HCT116 (cell line): ENCODE measurements at regions of chr11 and their contacts with region 1.

Region 1: GRCh38 chr11:62905927-62906531 is 15.1 kb downstream of the CHRM1 start:
- DNase-seq: peak; percentile 73
- ATAC-seq: peak; percentile 86
- H3K4me3 ChIP-seq: no peak overlapping the region
- H3K27ac ChIP-seq: no peak overlapping the region
- H3K4me1 ChIP-seq: peaks cover 9 to 18% of the 10 kb centered on the region in 2 experiments; a peak in 3 of 4 replicates
- H3K27me3 ChIP-seq: no peaks in the 10 kb centered on the region
- CTCF ChIP-seq: peak; percentile 97 to 100 (median 98)
- POLR2A ChIP-seq: no peak
- RAD21 ChIP-seq: peak; percentile 98

Region 2: GRCh38 chr11:62948765-62949320 is 42.8 kb after region 1 on chr11:
- CTCF ChIA-PET with region 1: no interaction called
- POLR2A ChIA-PET with region 1: no interaction called
- RAD21 ChIA-PET with region 1: no interaction called
- intact Hi-C with region 1: no loop called
- DNase-seq: no peak
- ATAC-seq: no peak
- H3K4me3 ChIP-seq: no peak overlapping the region
- H3K27ac ChIP-seq: no peak overlapping the region
- H3K4me1 ChIP-seq: no peaks in the 10 kb centered on the region
- H3K27me3 ChIP-seq: no peaks in the 10 kb centered on the region
- CTCF ChIP-seq: no peak
- POLR2A ChIP-seq: no peak
- RAD21 ChIP-seq: no peak

Region 3: DNA sequence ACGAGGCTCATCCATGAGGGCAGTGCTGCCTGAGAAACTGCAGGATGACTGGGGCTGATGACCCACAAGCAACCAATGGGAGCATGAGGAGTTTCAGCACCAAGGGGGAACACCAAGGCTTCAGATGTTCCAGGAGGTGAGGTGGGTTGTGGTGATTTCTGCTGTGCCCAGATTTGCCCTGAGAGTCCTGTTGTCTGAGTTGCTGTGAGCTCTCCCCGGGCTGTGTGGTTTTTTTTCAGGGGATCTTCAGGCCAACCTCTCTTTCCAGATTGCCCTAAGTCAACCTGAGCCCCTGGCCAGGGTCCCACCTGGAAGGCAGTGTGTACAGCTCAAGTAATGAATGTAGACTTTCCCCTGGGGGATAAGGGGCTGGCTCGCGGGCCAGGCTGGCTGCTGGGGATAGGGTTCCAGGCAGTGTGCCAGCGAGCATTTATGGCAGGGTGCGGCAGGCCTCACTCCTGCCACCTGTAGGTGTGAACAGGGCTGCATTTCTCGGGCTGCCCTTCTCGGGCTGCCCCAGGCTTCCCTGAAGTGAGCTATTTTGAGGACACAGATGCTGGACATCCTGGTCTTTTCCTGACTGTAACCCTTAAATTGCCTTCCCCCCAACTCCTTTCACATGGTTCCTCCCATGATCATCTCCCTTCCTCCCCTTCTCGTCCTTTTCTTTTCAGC is 69.0 kb after region 1 on chr11:
- CTCF ChIA-PET with region 1: interaction called, 27 read pairs
- POLR2A ChIA-PET with region 1: no interaction called
- RAD21 ChIA-PET with region 1: interaction called, 5 to 11 read pairs
- intact Hi-C with region 1: loop called (anchors 1 kb)
- DNase-seq: peak; percentile 36
- ATAC-seq: peak; percentile 94
- H3K4me3 ChIP-seq: no peak overlapping the region
- H3K27ac ChIP-seq: no peak overlapping the region
- H3K4me1 ChIP-seq: peaks cover 7 to 16% of the 10 kb centered on the region in 2 experiments; a peak in 3 of 4 replicates
- H3K27me3 ChIP-seq: no peaks in the 10 kb centered on the region
- CTCF ChIP-seq: peak; percentile 44 to 82 (median 73); a peak in 5 of 6 replicates
- POLR2A ChIP-seq: no peak
- RAD21 ChIP-seq: peak; percentile 44

Region 4: DNA sequence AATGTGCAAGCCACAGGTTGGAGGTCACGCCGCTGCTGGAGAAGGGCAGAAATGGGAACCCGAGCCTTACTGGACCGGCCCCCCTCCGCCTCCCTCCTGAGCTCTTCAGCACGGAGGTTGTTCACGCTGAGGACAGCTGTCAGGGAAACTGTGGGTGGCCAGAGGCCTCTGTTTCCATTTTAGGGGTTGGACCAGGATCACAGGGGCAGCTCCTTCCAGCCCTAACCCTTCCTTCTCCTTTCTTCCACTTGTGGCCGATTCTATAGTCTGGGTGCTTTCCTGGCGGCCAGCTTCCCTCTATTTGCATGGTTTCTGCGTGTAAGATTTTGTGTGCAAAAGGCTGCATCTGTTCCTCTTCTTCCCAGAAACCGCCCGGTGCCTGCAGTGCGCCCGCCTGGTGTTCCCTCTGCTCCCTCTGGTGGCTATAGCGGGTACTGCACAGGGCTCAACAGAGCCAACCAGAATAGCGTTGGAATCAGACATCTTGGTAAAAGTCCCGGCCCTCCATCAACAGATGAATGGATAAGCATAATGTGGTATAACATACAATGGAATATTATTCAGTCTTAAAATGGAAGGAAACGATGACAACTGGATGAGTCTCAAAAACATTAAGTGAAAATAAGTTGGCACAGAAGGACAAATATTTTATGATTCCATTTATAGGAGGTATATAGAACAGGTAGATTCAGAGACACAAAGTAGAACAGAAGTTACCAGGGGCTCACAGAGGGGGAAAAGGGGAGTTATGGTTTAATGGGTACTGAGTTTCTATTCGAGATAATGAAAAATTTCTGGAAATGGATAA is 118.0 kb after region 1 on chr11:
- CTCF ChIA-PET with region 1: interaction called, 285 read pairs
- POLR2A ChIA-PET with region 1: interaction called, 25 read pairs
- RAD21 ChIA-PET with region 1: interaction called, 10 to 14 read pairs
- intact Hi-C with region 1: loop called (anchors 1 kb)
- DNase-seq: peak; percentile 57
- ATAC-seq: peak; percentile 77
- H3K4me3 ChIP-seq: no peak overlapping the region
- H3K27ac ChIP-seq: no peak overlapping the region
- H3K4me1 ChIP-seq: peaks cover 4 to 13% of the 10 kb centered on the region in 2 experiments; a peak in 3 of 4 replicates
- H3K27me3 ChIP-seq: no peaks in the 10 kb centered on the region
- CTCF ChIP-seq: peak; percentile 96 to 100 (median 100)
- POLR2A ChIP-seq: no peak
- RAD21 ChIP-seq: peak; percentile 97

Region 5: DNA sequence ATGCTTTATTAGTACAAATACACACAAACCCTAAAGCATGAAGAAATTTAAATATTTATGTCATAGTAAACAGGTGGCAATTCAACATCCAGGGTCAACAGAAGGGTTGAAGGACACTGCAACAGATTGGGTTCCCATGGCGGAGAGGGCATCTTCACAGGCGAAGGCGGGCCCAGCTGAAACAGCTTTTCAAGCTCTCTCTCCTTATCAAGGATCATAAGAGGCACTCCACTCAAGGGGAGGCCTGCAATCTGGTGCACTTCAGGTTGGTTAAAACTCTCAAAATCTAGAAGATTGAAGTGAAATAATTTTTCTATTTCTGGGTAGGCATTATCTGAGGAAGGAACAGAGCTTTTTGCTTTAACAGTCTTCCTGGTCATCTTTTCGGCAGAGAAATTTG is 126.4 kb after region 1 on chr11:
- CTCF ChIA-PET with region 1: interaction called, 11 read pairs
- POLR2A ChIA-PET with region 1: no interaction called
- RAD21 ChIA-PET with region 1: interaction called in 1 of 2 experiments, 5 read pairs
- intact Hi-C with region 1: no loop called
- DNase-seq: no peak
- ATAC-seq: no peak
- H3K4me3 ChIP-seq: no peak overlapping the region
- H3K27ac ChIP-seq: no peak overlapping the region
- H3K4me1 ChIP-seq: 0 out of 4 replicates have a peak, but pooled peaks cover 0 to 7% of the 10 kb centered on the region in 2 experiments
- H3K27me3 ChIP-seq: no peaks in the 10 kb centered on the region; the same call in 1 of the 2 replicates
- CTCF ChIP-seq: no peak
- POLR2A ChIP-seq: no peak
- RAD21 ChIP-seq: no peak

Region 6: DNA sequence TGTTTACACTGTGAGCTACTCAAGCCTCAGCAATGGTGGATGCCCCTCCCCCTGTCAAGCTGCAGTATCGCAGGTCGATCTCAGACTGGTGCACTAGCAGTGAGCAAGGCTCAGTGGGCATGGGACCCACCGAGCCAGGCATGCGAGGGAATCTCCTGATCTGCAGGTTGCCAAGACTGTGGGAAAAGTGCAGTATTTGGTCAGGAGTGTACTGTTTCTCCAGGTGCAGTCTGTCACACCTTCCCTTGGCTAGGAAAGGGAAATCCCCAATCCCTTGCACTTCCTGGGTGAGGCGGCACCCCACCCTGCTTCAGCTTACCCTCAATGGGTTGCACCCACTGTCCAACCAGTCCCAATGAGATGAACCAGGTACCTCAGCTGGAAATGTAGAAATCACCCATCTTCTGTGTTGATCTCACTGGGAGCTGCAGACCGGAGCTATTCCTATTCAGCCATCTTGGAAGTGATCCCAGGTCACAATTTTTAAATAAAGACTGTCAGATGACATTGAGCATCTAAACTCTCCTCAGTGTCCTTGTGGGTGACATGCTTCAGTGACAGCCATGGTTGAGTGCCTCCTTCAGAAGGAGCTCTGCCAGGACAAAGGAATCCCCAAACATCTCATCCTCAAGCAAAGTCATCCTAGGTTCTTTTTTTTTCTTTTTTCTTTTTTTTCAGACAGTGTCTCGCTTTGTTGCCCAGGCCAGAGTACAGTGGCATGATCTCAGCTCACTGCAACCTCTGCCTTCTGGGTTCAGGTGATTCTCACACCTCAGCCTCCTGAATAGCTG is 227.2 kb after region 1 on chr11:
- CTCF ChIA-PET with region 1: interaction called, 6 read pairs
- POLR2A ChIA-PET with region 1: no interaction called
- RAD21 ChIA-PET with region 1: no interaction called
- intact Hi-C with region 1: loop called (anchors 2 kb)
- DNase-seq: no peak
- ATAC-seq: no peak
- H3K4me3 ChIP-seq: no peak overlapping the region
- H3K27ac ChIP-seq: no peak overlapping the region
- H3K4me1 ChIP-seq: no peaks in the 10 kb centered on the region
- H3K27me3 ChIP-seq: peaks cover 40% of the 10 kb centered on the region
- CTCF ChIP-seq: no peak
- POLR2A ChIP-seq: no peak
- RAD21 ChIP-seq: no peak

Region 7: DNA sequence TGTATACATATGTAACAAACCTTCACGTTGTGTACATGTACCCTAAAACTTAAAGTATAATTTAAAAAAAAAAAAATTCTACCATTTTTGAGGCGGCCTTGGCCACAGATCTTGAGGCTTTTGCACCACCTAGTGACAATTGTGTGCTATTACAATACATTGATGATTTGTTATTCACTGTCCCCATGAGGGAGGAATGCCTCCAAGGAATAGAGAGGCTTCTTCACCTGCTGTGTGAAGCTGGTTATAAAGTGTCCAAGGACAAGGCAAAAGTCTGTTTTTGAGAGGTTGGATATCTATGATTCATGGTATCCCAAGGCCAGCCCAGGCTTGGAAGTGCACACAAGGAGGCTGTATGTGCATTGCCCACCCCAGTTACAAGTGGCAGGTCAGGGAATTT is 306.7 kb after region 1 on chr11:
- CTCF ChIA-PET with region 1: interaction called, 7 read pairs
- POLR2A ChIA-PET with region 1: no interaction called
- RAD21 ChIA-PET with region 1: interaction called in 1 of 2 experiments, 4 read pairs
- intact Hi-C with region 1: loop called (anchors 1 kb)
- DNase-seq: peak; percentile 10
- ATAC-seq: peak; percentile 81
- H3K4me3 ChIP-seq: no peak overlapping the region
- H3K27ac ChIP-seq: no peak overlapping the region
- H3K4me1 ChIP-seq: no peaks in the 10 kb centered on the region
- H3K27me3 ChIP-seq: peaks cover 26% of the 10 kb centered on the region
- CTCF ChIP-seq: peak; percentile 38 to 56 (median 55); a peak in 4 of 6 replicates
- POLR2A ChIP-seq: no peak
- RAD21 ChIP-seq: peak; percentile 65